Activated T-helper 2 cell treated with anti-CD3 and anti-CD28 coated beads, Interferon-gamma antibody, Interleukin-2, Interleukin-4, amounts not matched to agents 10 μg/mL and 5 μg/mL and 100 μg/mL, durations not matched to agents 14 hours and 24 hours and 36 hours (primary cell): ENCODE measurements at regions of chr2 and their contacts with region 1.

Region 1: DNA sequence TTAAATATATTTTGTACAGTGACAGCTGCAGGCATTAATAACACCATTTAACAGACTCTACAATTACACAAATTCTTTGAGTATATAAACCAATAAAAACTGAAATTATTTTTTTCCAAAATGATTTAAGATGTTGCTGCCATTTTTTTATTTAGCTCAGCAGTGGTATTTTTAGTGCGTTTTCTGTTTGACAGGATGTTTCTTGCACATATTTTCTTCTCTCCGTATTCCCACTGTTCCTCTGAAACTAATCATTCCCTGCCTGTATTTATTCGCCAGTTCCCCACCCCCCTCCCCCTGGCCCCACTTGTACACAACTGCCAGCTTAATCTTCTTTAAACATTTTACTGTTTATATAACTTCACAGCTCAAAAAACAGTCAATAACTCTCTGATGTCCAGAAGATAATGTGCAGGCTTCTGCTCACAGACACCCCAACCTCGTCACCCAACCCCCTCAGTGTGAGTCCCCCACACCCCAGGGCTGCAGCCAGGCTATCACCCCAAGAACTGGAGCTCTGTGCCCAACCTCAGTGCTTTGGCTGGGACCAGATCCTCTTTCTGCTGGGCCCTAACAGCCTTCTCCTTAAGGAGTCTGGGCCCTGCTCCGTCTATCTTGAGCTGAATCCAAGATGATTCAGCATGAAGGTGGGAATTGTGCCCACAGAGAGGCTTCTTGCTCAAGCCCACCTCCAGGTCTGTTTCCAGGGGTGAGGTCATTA is 41.6 kb upstream of the MAP4K4 start:
- DNase-seq: no peak
- H3K4me3 Mint-ChIP-seq: no peak overlapping the region
- H3K27ac Mint-ChIP-seq: no peak overlapping the region
- H3K4me1 Mint-ChIP-seq: peaks cover 13% of the 10 kb centered on the region
- H3K27me3 Mint-ChIP-seq: no peaks in the 10 kb centered on the region

Region 2: GRCh38 chr2:101558740-101559519 is 96.9 kb before region 1 on chr2:
- intact Hi-C with region 1: no loop called
- DNase-seq: no peak
- H3K4me3 Mint-ChIP-seq: no peak overlapping the region
- H3K27ac Mint-ChIP-seq: no peak overlapping the region
- H3K4me1 Mint-ChIP-seq: peaks cover 27% of the 10 kb centered on the region
- H3K27me3 Mint-ChIP-seq: peaks cover 2% of the 10 kb centered on the region

Region 3: GRCh38 chr2:101697124-101698013 is 41.5 kb after region 1 on chr2 and contains the start of gene MAP4K4:
- intact Hi-C with region 1: loop called (anchors 5 kb)
- DNase-seq: peak; percentile 69
- H3K4me3 Mint-ChIP-seq: peak within 1 kb of the TSS; percentile 84
- H3K27ac Mint-ChIP-seq: peak within 1 kb of the TSS; percentile 83
- H3K4me1 Mint-ChIP-seq: peaks cover 21% of the 10 kb centered on the region
- H3K27me3 Mint-ChIP-seq: no peaks in the 10 kb centered on the region
- total RNA-seq, gene MAP4K4: 36.8 and 40.6 TPM in 2 replicates

Region 4: GRCh38 chr2:101717071-101717845 is 61.4 kb after region 1 on chr2:
- intact Hi-C with region 1: loop called (anchors 5 kb)
- DNase-seq: no peak
- H3K4me3 Mint-ChIP-seq: peak overlapping the region; percentile 38
- H3K27ac Mint-ChIP-seq: peak overlapping the region; percentile 83
- H3K4me1 Mint-ChIP-seq: peaks cover 60% of the 10 kb centered on the region
- H3K27me3 Mint-ChIP-seq: no peaks in the 10 kb centered on the region

Region 5: DNA sequence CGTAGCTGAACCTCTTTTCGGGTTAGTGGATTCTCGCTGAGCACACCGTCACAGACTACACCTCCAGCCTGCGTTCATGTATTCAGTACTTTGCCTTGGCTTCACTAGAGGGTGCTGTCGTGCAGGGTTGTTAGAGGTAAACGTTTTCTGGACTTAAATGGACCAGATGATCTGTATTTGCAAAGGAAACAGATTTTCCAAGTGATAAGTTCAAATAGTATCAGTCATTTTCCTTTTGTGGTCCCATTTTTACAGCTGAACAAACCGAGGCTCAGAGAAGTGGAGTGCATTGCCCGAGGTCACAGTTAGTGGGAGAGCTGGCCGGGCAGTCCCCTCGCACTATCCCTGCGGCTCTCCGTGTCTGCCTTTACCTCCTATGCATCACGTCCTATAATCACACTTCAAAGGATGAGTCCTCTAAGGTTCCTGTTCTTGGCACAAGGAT is 167.5 kb after region 1 on chr2:
- intact Hi-C with region 1: loop called (anchors 1 kb)
- DNase-seq: peak; percentile 51
- H3K4me3 Mint-ChIP-seq: peak overlapping the region; percentile 18
- H3K27ac Mint-ChIP-seq: peak overlapping the region; percentile 21
- H3K4me1 Mint-ChIP-seq: peaks cover 63% of the 10 kb centered on the region
- H3K27me3 Mint-ChIP-seq: no peaks in the 10 kb centered on the region